ENCODE measurements at regions of chr22 and their contacts with region 1.

Region 1: GRCh38 chr22:20449819-20450550 is 12.4 kb upstream of the SCARF2 start:
- DNase-seq: no peak
- ATAC-seq: peak; percentile 17; the same call in 1 of the 3 replicates
- H3K4me3 ChIP-seq: no peak overlapping the region
- H3K27ac ChIP-seq: no peak overlapping the region
- H3K4me1 ChIP-seq: peaks cover 0 to 6% of the 10 kb centered on the region in 2 experiments; a peak in 1 of 5 replicates
- H3K27me3 ChIP-seq: peaks cover 26 to 41% of the 10 kb centered on the region in 2 experiments; a peak in 4 of 5 replicates
- CTCF ChIP-seq: 0 out of 6 replicates have a peak, but pooled peaks of 1 of the 3 experiments have one; percentile 10
- EP300 ChIP-seq: no peak
- POLR2A ChIP-seq: no peak
- RAD21 ChIP-seq: no peak

Region 2: DNA sequence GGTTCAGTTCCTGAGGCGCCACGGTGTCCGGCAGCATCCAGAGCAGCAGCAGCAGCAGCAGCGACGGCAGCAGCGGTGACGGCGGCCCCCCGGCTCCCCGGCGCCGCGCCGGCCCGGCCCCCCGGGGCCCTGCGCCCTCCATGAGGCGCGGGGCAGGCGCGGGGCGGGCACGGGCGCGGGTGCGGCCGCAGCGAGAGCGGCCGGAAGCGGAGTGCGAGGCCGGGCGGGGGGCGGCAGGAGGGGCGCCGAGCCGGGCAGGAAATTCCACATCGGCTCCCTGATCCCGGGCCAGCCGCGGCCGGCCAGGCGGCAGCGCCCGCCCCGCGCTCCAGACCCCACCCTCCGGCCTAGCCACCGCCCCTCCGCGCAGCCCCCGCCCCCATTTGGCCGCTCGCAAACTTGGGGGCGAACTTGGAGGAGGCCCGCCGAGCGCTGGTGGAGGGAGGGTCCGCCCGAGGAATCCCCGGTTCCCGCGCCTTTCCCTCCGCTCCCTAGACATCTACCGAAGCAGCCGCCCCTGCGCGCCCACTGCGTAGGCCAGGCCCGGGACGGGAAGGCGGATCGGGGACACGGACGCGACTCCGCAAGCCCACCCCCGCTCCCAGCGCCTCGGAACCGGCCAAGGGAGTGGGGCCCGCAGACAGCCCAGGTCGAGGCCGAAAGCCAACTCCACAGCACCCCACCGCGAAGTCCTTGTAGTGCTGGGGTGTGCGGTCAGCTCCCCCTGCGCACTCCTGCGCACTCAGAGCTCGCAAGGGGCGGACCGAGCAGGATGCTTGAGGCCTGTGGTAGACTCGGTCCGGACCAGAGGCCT is 12.2 kb before region 1 on chr22 and contains the start of gene SCARF2:
- CTCF ChIA-PET with region 1: no interaction called
- POLR2A ChIA-PET with region 1: interaction called, 46 read pairs
- in situ Hi-C with region 1: no loop called
- intact Hi-C with region 1: no loop called
- DNase-seq: peak in 2 of 4 experiments; percentile 89
- ATAC-seq: no peak
- H3K4me3 ChIP-seq: no peak within 1 kb of the TSS
- H3K27ac ChIP-seq: no peak within 1 kb of the TSS
- H3K4me1 ChIP-seq: peaks cover 0 to 38% of the 10 kb centered on the region in 2 experiments; a peak in 2 of 5 replicates
- H3K27me3 ChIP-seq: peaks cover 51 to 96% of the 10 kb centered on the region in 2 experiments
- CTCF ChIP-seq: no peak
- EP300 ChIP-seq: no peak
- POLR2A ChIP-seq: no peak
- RAD21 ChIP-seq: no peak
- polyA plus RNA-seq, gene SCARF2: not detected

Region 3: GRCh38 chr22:20463324-20464095 is 13.5 kb after region 1 on chr22:
- CTCF ChIA-PET with region 1: interaction called, 3 read pairs
- POLR2A ChIA-PET with region 1: interaction called, 22 read pairs
- in situ Hi-C with region 1: no loop called
- intact Hi-C with region 1: no loop called
- DNase-seq: no peak
- ATAC-seq: no peak
- H3K4me3 ChIP-seq: no peak overlapping the region
- H3K27ac ChIP-seq: no peak overlapping the region
- H3K4me1 ChIP-seq: peaks cover 0 to 3% of the 10 kb centered on the region in 2 experiments; a peak in 2 of 5 replicates
- H3K27me3 ChIP-seq: peaks cover 15 to 25% of the 10 kb centered on the region in 2 experiments; a peak in 4 of 5 replicates
- CTCF ChIP-seq: no peak
- EP300 ChIP-seq: no peak
- POLR2A ChIP-seq: no peak
- RAD21 ChIP-seq: no peak

Region 4: GRCh38 chr22:20741634-20742581 is 291.9 kb after region 1 on chr22:
- CTCF ChIA-PET with region 1: no interaction called
- POLR2A ChIA-PET with region 1: no interaction called
- in situ Hi-C with region 1: no loop called
- intact Hi-C with region 1: no loop called
- DNase-seq: peak; percentile 87 to 93 (median 90)
- ATAC-seq: peak; percentile 78
- H3K4me3 ChIP-seq: no peak overlapping the region
- H3K27ac ChIP-seq: no peak overlapping the region
- H3K4me1 ChIP-seq: no peaks in the 10 kb centered on the region
- H3K27me3 ChIP-seq: no peaks in the 10 kb centered on the region
- CTCF ChIP-seq: peak; percentile 94 to 100 (median 99)
- EP300 ChIP-seq: no peak
- POLR2A ChIP-seq: no peak
- RAD21 ChIP-seq: peak; percentile 54 to 86

Measured in K562 (cell line).